ENCODE measurements at regions of chr4 and their contacts with region 1.

Region 1: DNA sequence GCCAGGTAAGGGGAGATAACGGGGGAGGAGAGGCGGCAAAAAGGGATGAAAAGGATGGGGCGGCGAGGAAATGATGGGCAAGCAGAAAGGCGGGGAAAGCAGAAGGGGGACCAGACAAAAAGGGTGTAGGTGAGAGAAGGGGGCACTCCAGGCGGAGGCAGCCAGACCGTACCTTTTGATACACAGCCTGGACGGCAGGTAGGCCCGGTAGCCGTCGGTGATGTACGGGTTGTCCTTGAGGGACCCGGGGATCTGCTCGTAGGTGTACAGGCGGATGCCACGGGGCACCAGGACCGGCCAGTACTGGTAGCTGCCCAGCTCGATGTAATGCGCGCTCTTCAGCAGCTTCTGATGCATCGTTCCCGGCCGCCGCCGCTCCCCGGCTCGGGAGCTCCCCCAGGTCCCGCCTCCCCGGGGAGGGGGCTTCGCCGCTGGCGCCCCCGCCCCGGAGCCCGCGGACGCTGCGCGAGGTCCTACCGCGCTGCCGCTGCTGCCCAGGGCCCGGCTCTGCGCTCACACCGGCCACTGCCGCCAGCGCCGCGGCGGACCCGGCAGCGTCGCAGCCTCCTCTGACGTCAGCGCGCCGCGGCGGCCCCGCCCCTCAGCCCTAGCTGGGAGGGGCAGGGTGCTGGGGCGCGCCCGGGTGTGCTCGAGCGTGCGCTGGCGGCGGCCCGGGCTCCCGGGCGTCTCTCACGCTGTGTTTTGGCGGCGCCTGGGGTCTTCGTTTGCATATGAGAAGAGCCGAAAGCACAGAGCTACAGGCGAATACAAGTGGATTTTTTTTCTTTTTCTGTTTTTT is at the start of gene PAQR3:
- ATAC-seq: peak; percentile 92 to 98 (median 94)
- H3K4me3 ChIP-seq: peak within 1 kb of the TSS; percentile 54 to 80 (median 72)
- H3K27ac ChIP-seq: peak within 1 kb of the TSS; percentile 47 to 59
- H3K4me1 ChIP-seq: peaks cover 15 to 29% of the 10 kb centered on the region in 2 donors
- total RNA-seq, gene PAQR3: 18.6 to 84.1 (median 61.6) TPM

Region 2: GRCh38 chr4:79107014-79107413 is 167.9 kb after region 1 on chr4:
- in situ Hi-C with region 1: no loop called
- ATAC-seq: no peak
- H3K4me3 ChIP-seq: no peak overlapping the region
- H3K27ac ChIP-seq: no peak overlapping the region
- H3K4me1 ChIP-seq: peaks cover 0 to 3% of the 10 kb centered on the region in 2 donors

Region 3: GRCh38 chr4:79198951-79199587 is 260.0 kb after region 1 on chr4:
- in situ Hi-C with region 1: no loop called
- ATAC-seq: peak in 5 of 8 experiments; percentile 22 to 92 (median 88)
- H3K4me3 ChIP-seq: no peak overlapping the region
- H3K27ac ChIP-seq: no peak overlapping the region
- H3K4me1 ChIP-seq: peaks cover 7 to 28% of the 10 kb centered on the region in 2 donors

Region 4: DNA sequence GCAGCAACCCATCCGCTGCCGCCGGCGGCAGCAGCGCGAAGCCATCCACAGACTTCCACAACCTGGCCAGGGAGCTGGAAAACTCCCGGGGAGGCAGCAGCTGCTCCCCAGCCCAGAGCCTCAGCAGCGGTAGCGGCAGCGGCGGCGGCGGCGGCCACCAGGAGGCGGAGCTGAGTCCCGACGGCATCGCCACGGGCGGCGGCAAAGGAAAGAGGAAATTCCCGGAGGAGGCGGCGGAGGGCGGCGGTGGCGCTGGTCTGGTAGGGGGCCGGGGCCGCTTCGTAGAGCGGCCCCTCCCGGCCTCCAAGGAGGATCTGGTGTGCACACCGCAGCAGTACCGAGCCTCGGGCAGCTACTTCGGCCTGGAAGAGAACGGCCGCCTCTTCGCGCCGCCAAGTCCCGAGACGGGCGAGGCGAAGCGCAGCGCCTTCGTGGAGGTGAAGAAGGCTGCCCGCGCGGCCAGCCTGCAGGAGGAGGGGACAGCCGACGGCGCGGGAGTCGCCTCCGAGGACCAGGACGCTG is 1263.2 kb after region 1 on chr4:
- in situ Hi-C with region 1: loop called in 2 of 9 experiments (anchors 25 kb)
- ATAC-seq: peak; percentile 42 to 81 (median 68)
- H3K4me3 ChIP-seq: peak overlapping the region; percentile 20 to 94 (median 43)
- H3K27ac ChIP-seq: peak overlapping the region; percentile 74 to 77
- H3K4me1 ChIP-seq: peaks cover 5 to 17% of the 10 kb centered on the region in 2 donors

Region 5: DNA sequence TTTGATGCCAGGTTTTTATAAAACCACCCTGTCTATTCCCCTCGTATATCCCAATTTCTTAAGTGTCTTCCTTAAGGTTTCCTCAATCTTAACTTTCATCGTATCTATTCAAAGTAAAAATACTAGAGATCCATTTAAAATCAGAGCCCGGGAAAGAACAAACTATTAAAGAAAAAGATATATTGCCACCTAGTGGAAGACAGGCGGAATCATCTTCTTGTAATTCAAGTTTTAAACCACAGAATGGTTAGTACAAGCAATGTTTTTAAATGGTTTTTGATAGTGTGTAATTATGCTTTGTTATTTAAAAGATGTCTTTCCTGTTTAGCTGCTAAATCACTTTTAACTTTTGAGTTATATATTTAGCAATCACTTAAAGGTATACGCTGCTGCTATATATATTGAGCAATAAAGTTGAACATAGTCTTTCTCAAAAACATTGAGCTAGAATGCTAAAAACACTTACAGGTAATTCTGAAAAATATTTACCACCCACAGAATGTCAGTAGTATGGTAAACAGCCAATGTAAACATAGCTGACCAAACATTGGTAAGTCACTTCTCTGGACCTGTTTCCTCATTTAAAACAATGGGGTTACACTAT is 1276.5 kb after region 1 on chr4:
- in situ Hi-C with region 1: loop called in 2 of 9 experiments (anchors 10 to 25 kb)
- ATAC-seq: peak in 2 of 8 experiments; percentile 17 to 23
- H3K4me3 ChIP-seq: no peak overlapping the region
- H3K27ac ChIP-seq: no peak overlapping the region
- H3K4me1 ChIP-seq: no peaks in the 10 kb centered on the region